Calu3 (cell line): ENCODE measurements at regions of chrX and their contacts with region 1.

Region 1: GRCh38 chrX:119871599-119872395 is at the starts of genes NDUFA1 and RNF113A:
- DNase-seq: peak; percentile 84
- H3K4me3 Mint-ChIP-seq: peak within 1 kb of the TSS; percentile 93
- H3K27ac Mint-ChIP-seq: peak within 1 kb of the TSS; percentile 89
- H3K4me1 Mint-ChIP-seq: peaks cover 8% of the 10 kb centered on the region
- H3K27me3 Mint-ChIP-seq: no peaks in the 10 kb centered on the region
- CTCF ChIP-seq: no peak
- total RNA-seq, gene NDUFA1: 77.5 and 79.6 TPM in 2 replicates
- total RNA-seq, gene RNF113A: 16.9 and 18.3 TPM in 2 replicates

Region 2: DNA sequence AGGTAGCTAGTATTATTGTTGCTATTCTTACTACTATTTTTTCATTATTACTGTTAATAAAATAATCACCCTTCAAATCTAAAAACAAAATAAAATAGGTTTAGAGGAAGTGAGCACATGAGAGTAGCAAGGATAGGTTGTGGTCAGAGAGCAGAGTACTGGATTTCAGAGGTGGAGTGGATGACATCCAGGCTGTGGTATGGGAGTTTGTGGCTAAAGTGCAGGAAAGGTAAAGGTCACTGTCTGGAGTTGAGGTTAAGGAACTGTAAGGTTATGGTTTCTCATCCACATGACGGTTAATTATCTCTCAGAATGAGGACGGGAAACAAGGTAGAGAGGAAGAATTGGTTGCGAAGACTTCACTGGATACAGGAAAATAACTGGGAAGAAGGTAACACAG is 334.3 kb before region 1 on chrX:
- CTCF ChIA-PET with region 1: interaction called, 11 read pairs
- intact Hi-C with region 1: no loop called
- DNase-seq: no peak
- H3K4me3 Mint-ChIP-seq: no peak overlapping the region
- H3K27ac Mint-ChIP-seq: no peak overlapping the region
- H3K4me1 Mint-ChIP-seq: no peaks in the 10 kb centered on the region
- H3K27me3 Mint-ChIP-seq: no peaks in the 10 kb centered on the region
- CTCF ChIP-seq: no peak

Region 3: GRCh38 chrX:119617517-119618164 is 254.2 kb before region 1 on chrX:
- CTCF ChIA-PET with region 1: no interaction called
- intact Hi-C with region 1: no loop called
- DNase-seq: no peak
- H3K4me3 Mint-ChIP-seq: no peak overlapping the region
- H3K27ac Mint-ChIP-seq: no peak overlapping the region
- H3K4me1 Mint-ChIP-seq: peaks cover 7% of the 10 kb centered on the region
- H3K27me3 Mint-ChIP-seq: peaks cover 30% of the 10 kb centered on the region
- CTCF ChIP-seq: no peak

Region 4: DNA sequence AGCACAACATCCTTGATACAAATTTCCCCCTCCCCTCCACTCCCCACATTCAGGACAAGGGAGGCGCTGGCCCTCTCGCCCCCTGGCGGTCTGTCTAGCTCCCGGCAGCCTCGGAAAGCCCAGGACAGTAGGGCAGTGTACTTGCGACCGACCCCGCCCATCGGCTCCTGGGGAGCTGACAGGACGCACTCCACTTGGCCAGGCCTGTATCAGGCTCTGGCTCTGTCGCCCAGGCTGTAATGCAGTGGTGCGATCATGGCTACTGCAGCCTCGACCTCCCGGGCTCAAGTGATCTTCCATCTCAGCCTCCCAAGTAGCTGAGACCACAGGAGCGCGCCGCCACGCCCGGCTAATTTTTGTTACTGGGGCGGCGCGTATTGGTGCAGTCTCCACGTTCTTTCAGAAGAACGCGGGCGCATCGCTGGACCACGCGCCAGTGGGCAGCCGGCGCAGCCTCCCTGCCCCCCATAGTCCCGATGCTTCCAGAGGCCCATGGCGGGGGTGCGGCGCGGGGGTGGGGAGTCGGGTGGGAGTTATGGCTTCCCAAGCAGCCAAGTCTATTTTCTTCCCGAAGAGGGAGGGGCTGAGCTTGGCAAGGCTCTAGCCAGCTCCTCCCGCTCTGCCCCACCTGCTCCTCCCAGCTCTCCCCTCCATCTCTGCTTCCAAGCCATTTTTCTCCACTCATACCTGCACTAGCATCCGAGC is 16.1 kb after region 1 on chrX:
- CTCF ChIA-PET with region 1: no interaction called
- intact Hi-C with region 1: no loop called
- DNase-seq: peak; percentile 87
- H3K4me3 Mint-ChIP-seq: peak overlapping the region; percentile 69
- H3K27ac Mint-ChIP-seq: no peak overlapping the region
- H3K4me1 Mint-ChIP-seq: peaks cover 8% of the 10 kb centered on the region
- H3K27me3 Mint-ChIP-seq: no peaks in the 10 kb centered on the region
- CTCF ChIP-seq: peak; percentile 67

Region 5: GRCh38 chrX:119917877-119918276 is 46.1 kb after region 1 on chrX:
- CTCF ChIA-PET with region 1: no interaction called
- intact Hi-C with region 1: no loop called
- DNase-seq: no peak
- H3K4me3 Mint-ChIP-seq: no peak overlapping the region
- H3K27ac Mint-ChIP-seq: no peak overlapping the region
- H3K4me1 Mint-ChIP-seq: no peaks in the 10 kb centered on the region
- H3K27me3 Mint-ChIP-seq: peaks cover 19% of the 10 kb centered on the region
- CTCF ChIP-seq: no peak

Region 6: GRCh38 chrX:120736989-120737388 is 865.2 kb after region 1 on chrX:
- CTCF ChIA-PET with region 1: no interaction called
- intact Hi-C with region 1: no loop called
- DNase-seq: no peak
- H3K4me3 Mint-ChIP-seq: no peak overlapping the region
- H3K27ac Mint-ChIP-seq: no peak overlapping the region
- H3K4me1 Mint-ChIP-seq: no peaks in the 10 kb centered on the region
- H3K27me3 Mint-ChIP-seq: peaks cover 16% of the 10 kb centered on the region
- CTCF ChIP-seq: no peak